Activated naive CD4-positive, alpha-beta T cell treated with anti-CD3 and anti-CD28 coated beads for 36 hours (primary cell): ENCODE measurements at regions of chrX and their contacts with region 1.

Region 1: GRCh38 chrX:150544222-150544787 is 24.1 kb upstream of the MTM1 start:
- DNase-seq: peak; percentile 44
- H3K4me3 Mint-ChIP-seq: no peak overlapping the region
- H3K27ac Mint-ChIP-seq: no peak overlapping the region
- H3K4me1 Mint-ChIP-seq: peaks cover 17% of the 10 kb centered on the region
- H3K27me3 Mint-ChIP-seq: no peaks in the 10 kb centered on the region

Region 2: DNA sequence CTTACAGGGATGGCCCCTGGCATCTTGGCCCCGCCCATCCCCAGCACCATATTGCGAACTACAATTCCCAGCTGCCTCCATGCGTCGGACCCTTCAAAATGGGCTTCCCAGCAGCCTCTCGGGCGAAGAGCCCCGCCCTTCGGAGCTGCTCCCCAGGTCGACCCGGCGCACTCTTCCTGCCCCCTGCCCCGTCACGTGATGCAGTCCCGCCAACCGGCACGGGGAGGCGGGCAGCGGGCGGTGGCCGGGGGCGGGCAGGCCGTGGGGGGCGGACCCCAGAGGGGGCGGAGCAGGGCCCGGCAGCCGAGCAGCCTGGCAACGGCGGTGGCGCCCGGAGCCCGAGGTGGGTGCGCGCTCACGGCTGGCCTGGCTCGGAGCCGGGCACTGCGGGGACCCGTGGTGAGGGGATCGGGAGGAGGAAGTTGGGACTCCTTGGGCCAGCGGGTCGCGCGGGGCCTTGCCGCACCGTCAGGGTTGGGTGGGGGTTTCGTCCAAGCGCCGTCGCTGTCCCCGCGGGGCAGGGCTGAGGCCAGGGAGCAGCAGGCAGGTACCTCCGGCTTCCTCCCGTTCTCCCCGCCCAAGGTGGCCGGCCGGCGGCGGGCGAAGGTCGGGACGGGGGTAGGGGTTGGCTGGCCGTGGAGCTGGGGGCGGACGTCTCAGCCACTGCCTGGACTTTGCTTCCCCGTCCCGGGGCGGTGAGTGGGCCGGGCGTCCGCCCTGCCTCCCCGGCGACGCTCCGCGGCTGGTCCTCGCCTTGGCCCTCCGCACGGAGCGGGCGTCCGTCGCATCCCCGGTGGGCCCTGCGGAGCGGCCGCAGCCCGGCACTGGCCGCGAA is 24.2 kb after region 1 on chrX and contains the start of gene MTM1:
- CTCF ChIA-PET with region 1: no interaction called
- intact Hi-C with region 1: loop called (anchors 1 kb)
- DNase-seq: peak; percentile 93
- H3K4me3 Mint-ChIP-seq: peak within 1 kb of the TSS; percentile 78
- H3K27ac Mint-ChIP-seq: peak within 1 kb of the TSS; percentile 97
- H3K4me1 Mint-ChIP-seq: peaks cover 32% of the 10 kb centered on the region
- H3K27me3 Mint-ChIP-seq: no peaks in the 10 kb centered on the region
- total RNA-seq, gene MTM1: 17.8 to 19.2 TPM

Region 3: GRCh38 chrX:150587585-150588503 is 43.5 kb after region 1 on chrX:
- CTCF ChIA-PET with region 1: interaction called, 8 read pairs
- intact Hi-C with region 1: loop called (anchors 1 kb)
- DNase-seq: peak; percentile 65
- H3K4me3 Mint-ChIP-seq: no peak overlapping the region
- H3K27ac Mint-ChIP-seq: no peak overlapping the region
- H3K4me1 Mint-ChIP-seq: peaks cover 23% of the 10 kb centered on the region
- H3K27me3 Mint-ChIP-seq: no peaks in the 10 kb centered on the region

Region 4: GRCh38 chrX:150643271-150643670 is 99.0 kb after region 1 on chrX:
- CTCF ChIA-PET with region 1: no interaction called
- intact Hi-C with region 1: loop called (anchors 1 kb)
- DNase-seq: no peak
- H3K4me3 Mint-ChIP-seq: no peak overlapping the region
- H3K27ac Mint-ChIP-seq: no peak overlapping the region
- H3K4me1 Mint-ChIP-seq: no peaks in the 10 kb centered on the region
- H3K27me3 Mint-ChIP-seq: no peaks in the 10 kb centered on the region